Spleen (tissue), 13 donors: ENCODE measurements at regions of chr2 and their contacts with region 1.

Region 1: GRCh38 chr2:130797493-130798435 is 39.0 kb upstream of the ARHGEF4 start:
- DNase-seq: peak; percentile 97
- H3K4me3 ChIP-seq: peak overlapping the region; percentile 64 to 97 (median 80)
- H3K27ac ChIP-seq: peak overlapping the region; percentile 75 to 97 (median 92)
- H3K4me1 ChIP-seq: peaks cover 5 to 21% (median 16%) of the 10 kb centered on the region in 6 donors
- H3K27me3 ChIP-seq: peaks cover 0 to 11% (median 0%) of the 10 kb centered on the region in 7 donors
- CTCF ChIP-seq: peak; percentile 78 to 93 (median 85)
- POLR2A ChIP-seq: no peak

Region 2: GRCh38 chr2:130873700-130874346 is 76.1 kb after region 1 on chr2:
- intact Hi-C with region 1: loop called (anchors 5 kb)
- DNase-seq: peak; percentile 75
- H3K4me3 ChIP-seq: no peak overlapping the region
- H3K27ac ChIP-seq: no peak overlapping the region
- H3K4me1 ChIP-seq: peaks cover 0 to 4% (median 0%) of the 10 kb centered on the region in 6 donors
- H3K27me3 ChIP-seq: peaks cover 0 to 14% (median 0%) of the 10 kb centered on the region in 7 donors
- CTCF ChIP-seq: peak in 10 of 11 experiments; percentile 27 to 77 (median 54)
- POLR2A ChIP-seq: no peak